ENCODE measurements at regions of chr7 and their contacts with region 1.

Region 1: GRCh38 chr7:8152489-8153192 is 109.3 kb downstream of the ICA1 start:
- DNase-seq: no peak
- ATAC-seq: peak; percentile 51 to 64
- H3K4me3 ChIP-seq: no peak overlapping the region
- H3K27ac ChIP-seq: no peak overlapping the region
- H3K4me1 ChIP-seq: no peaks in the 10 kb centered on the region
- H3K27me3 ChIP-seq: no peaks in the 10 kb centered on the region

Region 2: GRCh38 chr7:8201846-8202441 is 49.3 kb after region 1 on chr7:
- intact Hi-C with region 1: loop called in 1 of 4 experiments (anchors 10 kb)
- DNase-seq: peak in 1 of 3 donors; percentile 24
- ATAC-seq: peak in 1 of 2 donors; percentile 58
- H3K4me3 ChIP-seq: no peak overlapping the region
- H3K27ac ChIP-seq: no peak overlapping the region
- H3K4me1 ChIP-seq: no peaks in the 10 kb centered on the region
- H3K27me3 ChIP-seq: no peaks in the 10 kb centered on the region